Activated naive CD4-positive, alpha-beta T cell treated with anti-CD3 and anti-CD28 coated beads for 36 hours (primary cell): ENCODE measurements at regions of chr17 and their contacts with region 1.

Region 1: DNA sequence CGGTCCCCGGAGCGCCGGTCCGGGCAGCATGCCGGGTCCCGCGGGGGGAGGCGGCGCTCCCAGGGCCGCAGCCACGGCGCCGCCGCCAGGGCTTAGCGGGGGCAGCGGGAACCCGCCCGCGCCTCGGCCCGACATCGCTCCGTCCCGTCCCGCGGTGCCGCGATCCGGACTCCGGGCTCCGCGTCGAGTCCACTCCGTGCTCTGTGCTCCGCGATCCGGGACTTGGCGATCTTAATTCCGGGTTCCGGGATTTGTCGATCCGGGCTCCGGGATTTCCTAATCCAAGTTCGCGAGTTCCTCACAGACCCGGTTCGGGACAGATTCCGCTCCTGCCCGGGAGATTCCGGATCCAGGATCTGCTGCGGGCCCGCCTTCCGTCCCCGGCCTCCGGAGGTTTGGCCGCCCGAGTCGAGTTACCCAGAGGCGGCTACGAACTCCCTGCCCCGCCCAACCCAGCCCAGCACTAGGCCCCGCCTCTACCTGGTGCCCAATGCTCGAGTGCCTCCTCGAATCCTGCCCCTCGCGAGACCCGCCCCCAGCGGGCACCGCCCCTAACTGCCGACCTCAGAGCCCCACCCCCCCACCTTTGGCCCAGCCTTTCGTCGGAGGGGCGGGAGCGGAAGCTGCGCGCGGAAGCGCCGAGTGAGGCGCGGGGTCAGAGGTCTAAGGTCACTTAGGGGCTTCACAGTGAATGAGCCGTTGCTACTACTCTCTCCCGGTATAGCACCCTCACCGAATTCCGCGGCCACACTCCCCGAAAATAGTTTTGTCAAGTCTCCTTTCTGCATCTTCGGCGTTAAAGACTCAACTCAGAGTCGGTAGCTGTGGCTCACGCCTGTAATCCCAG is at the start of gene SMARCD2:
- DNase-seq: peak; percentile 100
- H3K4me3 Mint-ChIP-seq: peak within 1 kb of the TSS; percentile 94
- H3K27ac Mint-ChIP-seq: peak within 1 kb of the TSS; percentile 94
- H3K4me1 Mint-ChIP-seq: peaks cover 40% of the 10 kb centered on the region
- H3K27me3 Mint-ChIP-seq: no peaks in the 10 kb centered on the region
- total RNA-seq, gene SMARCD2: 98.5 to 107 TPM

Region 2: DNA sequence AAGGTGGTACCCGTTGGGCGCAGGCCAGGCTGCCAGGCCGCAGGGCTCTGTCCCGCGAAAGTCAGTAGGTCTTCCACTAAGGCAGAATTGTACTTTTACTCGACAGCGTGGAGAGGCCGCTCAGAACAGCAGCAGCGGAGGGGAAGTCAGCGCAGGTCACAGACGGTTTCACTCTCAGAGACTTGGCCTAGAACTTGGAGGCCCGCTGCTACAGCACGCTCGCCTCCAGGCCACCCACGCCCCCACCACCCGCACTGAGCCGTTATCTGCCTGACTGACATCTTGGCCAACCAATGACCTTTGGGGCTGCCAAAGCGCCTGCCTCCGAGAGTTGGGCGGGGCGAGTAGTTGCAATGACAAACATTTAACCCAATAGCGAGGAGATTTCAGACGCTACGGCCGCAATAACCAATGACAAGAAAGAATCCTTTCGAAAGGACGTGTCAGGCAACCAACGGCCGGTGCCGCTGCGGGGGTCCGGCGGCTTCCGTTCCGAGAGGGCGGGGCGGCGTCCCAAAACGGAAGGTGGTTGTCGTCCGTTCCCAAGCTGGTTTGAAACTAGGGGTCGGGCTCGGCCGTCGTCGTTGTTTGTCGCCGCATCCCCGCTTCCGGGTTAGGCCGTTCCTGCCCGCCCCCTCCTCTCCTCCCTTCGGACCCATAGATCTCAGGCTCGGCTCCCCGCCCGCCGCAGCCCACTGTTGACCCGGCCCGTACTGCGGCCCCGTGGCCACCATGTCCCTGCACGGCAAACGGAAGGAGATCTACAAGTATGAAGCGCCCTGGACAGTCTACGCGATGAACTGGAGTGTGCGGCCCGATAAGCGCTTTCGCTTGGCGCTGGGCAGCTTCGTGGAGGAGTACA is 292.6 kb before region 1 on chr17 and contains the start of gene DCAF7:
- CTCF ChIA-PET with region 1: no interaction called
- intact Hi-C with region 1: loop called (anchors 1 kb)
- DNase-seq: peak; percentile 100
- H3K4me3 Mint-ChIP-seq: peak within 1 kb of the TSS; percentile 82
- H3K27ac Mint-ChIP-seq: peak within 1 kb of the TSS; percentile 94
- H3K4me1 Mint-ChIP-seq: peaks cover 33% of the 10 kb centered on the region
- H3K27me3 Mint-ChIP-seq: no peaks in the 10 kb centered on the region
- total RNA-seq, gene DCAF7: 102 to 103 TPM

Region 3: DNA sequence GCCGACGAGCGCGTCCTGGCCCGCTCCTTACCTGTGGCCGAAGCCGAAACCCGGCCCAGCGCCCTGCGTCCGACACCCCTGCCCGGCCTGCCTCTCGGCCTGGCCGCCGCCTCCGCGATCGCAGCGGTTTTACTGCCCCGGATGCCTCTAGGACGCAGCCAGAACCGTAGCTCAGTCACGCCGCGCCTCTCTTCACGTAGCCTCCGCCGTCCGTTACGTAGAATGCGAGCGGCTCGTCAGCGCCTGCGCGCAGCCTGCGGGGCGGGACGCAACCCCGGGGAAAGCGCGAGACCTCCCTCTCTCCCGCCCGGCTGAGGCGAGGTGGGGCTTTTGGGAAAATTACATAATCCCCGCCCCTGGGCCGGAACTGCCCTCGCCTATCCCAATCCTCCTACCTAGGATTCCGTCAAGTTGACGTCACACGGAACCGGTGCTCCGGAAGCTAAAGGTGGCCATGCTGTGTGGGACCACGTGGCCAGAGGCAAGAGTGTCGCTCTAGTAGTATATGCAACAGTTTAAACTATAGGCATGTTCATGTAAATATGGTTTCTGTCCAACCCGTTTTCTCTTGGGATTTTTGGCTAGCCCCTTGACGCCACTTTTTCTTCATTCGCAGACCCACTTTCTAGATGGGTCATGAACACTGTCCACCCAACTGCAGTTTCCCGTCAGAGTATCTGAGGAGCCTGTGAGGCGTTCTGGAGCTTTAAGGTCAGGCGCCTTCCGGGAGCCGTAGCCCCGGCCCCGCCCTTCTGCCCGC is 69.2 kb before region 1 on chr17 and contains the start of gene CCDC47:
- CTCF ChIA-PET with region 1: interaction called, 4 read pairs
- intact Hi-C with region 1: loop called (anchors 1 kb)
- DNase-seq: peak; percentile 99
- H3K4me3 Mint-ChIP-seq: peak within 1 kb of the TSS; percentile 98
- H3K27ac Mint-ChIP-seq: peak within 1 kb of the TSS; percentile 100
- H3K4me1 Mint-ChIP-seq: peaks cover 58% of the 10 kb centered on the region
- H3K27me3 Mint-ChIP-seq: no peaks in the 10 kb centered on the region
- total RNA-seq, gene CCDC47: 40.5 to 42.1 TPM

Region 4: GRCh38 chr17:63827002-63827771 is 15.6 kb before region 1 on chr17 and contains the starts of genes FTSJ3 and PSMC5:
- CTCF ChIA-PET with region 1: interaction called, 29 read pairs
- intact Hi-C with region 1: loop called (anchors 1 kb)
- DNase-seq: peak; percentile 97
- H3K4me3 Mint-ChIP-seq: peak within 1 kb of the TSS; percentile 96
- H3K27ac Mint-ChIP-seq: peak within 1 kb of the TSS; percentile 99
- H3K4me1 Mint-ChIP-seq: peaks cover 82% of the 10 kb centered on the region
- H3K27me3 Mint-ChIP-seq: no peaks in the 10 kb centered on the region
- total RNA-seq, gene FTSJ3: 25.3 to 26.2 TPM
- total RNA-seq, gene PSMC5: 144 to 154 TPM

Region 5: GRCh38 chr17:63881876-63882601 is 39.3 kb after region 1 on chr17 and contains the start of gene GH2:
- CTCF ChIA-PET with region 1: no interaction called
- intact Hi-C with region 1: no loop called
- DNase-seq: peak; percentile 79
- H3K4me3 Mint-ChIP-seq: no peak within 1 kb of the TSS
- H3K27ac Mint-ChIP-seq: no peak within 1 kb of the TSS
- H3K4me1 Mint-ChIP-seq: peaks cover 2% of the 10 kb centered on the region
- H3K27me3 Mint-ChIP-seq: no peaks in the 10 kb centered on the region
- total RNA-seq, gene GH2: not detected

Region 6: GRCh38 chr17:64145757-64146417 is 303.1 kb after region 1 on chr17:
- CTCF ChIA-PET with region 1: no interaction called
- intact Hi-C with region 1: loop called (anchors 2 kb)
- DNase-seq: peak; percentile 97
- H3K4me3 Mint-ChIP-seq: no peak overlapping the region
- H3K27ac Mint-ChIP-seq: no peak overlapping the region
- H3K4me1 Mint-ChIP-seq: peaks cover 16% of the 10 kb centered on the region
- H3K27me3 Mint-ChIP-seq: no peaks in the 10 kb centered on the region